ENCODE measurements at regions of chr2 and their contacts with region 1.

Region 1: GRCh38 chr2:236536727-236537398 is 32.8 kb upstream of the ACKR3 start:
- DNase-seq: no peak
- ATAC-seq: peak in 1 of 8 donors; percentile 29
- H3K4me3 ChIP-seq: peak overlapping the region in 1 of 10 donors; percentile 30
- H3K27ac ChIP-seq: peak overlapping the region in 1 of 10 donors; percentile 32
- H3K4me1 ChIP-seq: peaks cover 0 to 14% (median 0%) of the 10 kb centered on the region in 9 donors
- H3K27me3 ChIP-seq: no peaks in the 10 kb centered on the region
- CTCF ChIP-seq: no peak

Region 2: GRCh38 chr2:236562434-236562833 is 25.6 kb after region 1 on chr2:
- intact Hi-C with region 1: loop called in 1 of 10 experiments (anchors 1 kb)
- DNase-seq: no peak
- ATAC-seq: peak in 2 of 8 donors; percentile 48 to 54
- H3K4me3 ChIP-seq: no peak overlapping the region
- H3K27ac ChIP-seq: no peak overlapping the region
- H3K4me1 ChIP-seq: peaks cover 0 to 12% (median 7%) of the 10 kb centered on the region in 9 donors
- H3K27me3 ChIP-seq: peaks cover 0 to 5% (median 0%) of the 10 kb centered on the region in 7 donors
- CTCF ChIP-seq: peak; percentile 27 to 79 (median 67)